ENCODE measurements at regions of chr2 and their contacts with region 1.

Region 1: DNA sequence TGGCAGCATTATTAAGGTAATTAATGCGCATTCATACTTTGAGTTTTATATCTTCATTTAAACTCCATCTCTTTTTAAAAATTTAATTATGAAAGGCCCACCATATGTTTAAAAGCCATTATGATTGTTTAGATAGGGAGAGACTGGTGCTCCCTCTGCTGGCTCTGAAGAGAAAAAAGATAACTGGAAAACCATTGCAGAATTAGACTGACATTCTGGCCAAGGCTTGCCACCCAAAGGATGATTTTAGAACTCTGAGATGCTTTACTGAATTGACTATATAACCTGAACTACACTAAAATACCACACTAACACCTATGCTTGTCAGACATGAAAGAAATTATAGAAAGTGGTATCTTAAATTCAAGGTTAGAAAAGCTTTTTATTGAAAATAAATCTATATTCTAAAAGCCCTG is 127.6 kb upstream of the SPOPL start:
- DNase-seq: no peak
- H3K4me3 ChIP-seq: no peak overlapping the region
- CTCF ChIP-seq: peak; percentile 49

Region 2: DNA sequence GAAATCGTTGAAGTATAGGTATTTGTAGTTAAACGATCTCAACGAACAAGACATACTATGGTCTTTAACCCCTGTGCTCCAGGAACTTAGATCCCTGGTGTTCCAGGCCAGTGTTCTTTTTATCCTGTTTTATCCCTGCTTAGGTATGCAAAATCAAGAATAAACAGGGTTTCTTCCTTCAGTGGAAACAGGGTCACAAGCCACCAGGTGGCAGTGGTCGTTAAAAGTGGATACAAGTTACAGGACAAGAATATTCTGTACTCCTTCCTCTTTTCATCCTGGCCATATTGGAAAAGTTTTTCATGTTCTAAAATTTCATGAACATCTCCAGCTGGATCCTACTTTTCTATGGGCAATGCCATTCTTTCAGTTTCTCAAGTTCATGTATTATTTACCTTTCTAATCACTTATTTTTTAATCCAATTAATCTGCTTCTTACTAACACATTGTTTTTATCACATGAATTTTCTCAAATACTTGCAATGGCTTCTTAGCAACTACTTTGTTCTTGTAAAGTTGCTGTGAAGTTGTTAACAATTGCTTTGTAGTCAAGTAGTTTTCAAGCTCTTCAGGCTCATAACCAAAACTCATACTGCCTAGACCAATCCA is 426.2 kb before region 1 on chr2:
- CTCF ChIA-PET with region 1: interaction called, 14 read pairs
- POLR2A ChIA-PET with region 1: no interaction called
- DNase-seq: no peak
- H3K4me3 ChIP-seq: no peak overlapping the region
- CTCF ChIP-seq: peak; percentile 58

Region 3: DNA sequence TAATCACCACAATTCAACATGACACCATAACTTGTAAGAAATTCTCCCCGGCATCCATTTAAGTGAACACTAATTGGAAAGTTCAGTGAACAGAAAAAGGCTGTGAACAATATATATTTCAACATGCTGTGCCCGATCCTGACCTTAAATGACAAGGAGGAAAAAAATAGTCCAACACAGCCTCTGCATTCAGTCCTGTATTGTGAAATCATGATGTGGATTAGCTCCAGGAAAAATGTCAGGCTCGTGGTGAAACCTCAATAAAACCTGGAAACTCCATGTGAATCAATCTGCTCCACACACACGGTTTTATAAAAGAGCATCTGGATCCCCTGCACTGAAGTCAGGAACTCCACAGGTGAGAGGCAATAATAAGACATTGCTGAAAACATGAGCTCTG is 17.8 kb before region 1 on chr2:
- CTCF ChIA-PET with region 1: interaction called, 11 read pairs
- POLR2A ChIA-PET with region 1: no interaction called
- DNase-seq: no peak
- H3K4me3 ChIP-seq: no peak overlapping the region
- CTCF ChIP-seq: no peak